ENCODE measurements at regions of chr17 and their contacts with region 1.

Region 1: GRCh38 chr17:76397687-76398487 is 13.5 kb downstream of the SPHK1 start:
- DNase-seq: peak; percentile 89
- CTCF ChIP-seq: peak; percentile 96

Region 2: GRCh38 chr17:76296186-76296585 is 101.7 kb before region 1 on chr17:
- CTCF ChIA-PET with region 1: interaction called, 203 read pairs
- POLR2A ChIA-PET with region 1: no interaction called
- DNase-seq: no peak
- CTCF ChIP-seq: no peak

Region 3: DNA sequence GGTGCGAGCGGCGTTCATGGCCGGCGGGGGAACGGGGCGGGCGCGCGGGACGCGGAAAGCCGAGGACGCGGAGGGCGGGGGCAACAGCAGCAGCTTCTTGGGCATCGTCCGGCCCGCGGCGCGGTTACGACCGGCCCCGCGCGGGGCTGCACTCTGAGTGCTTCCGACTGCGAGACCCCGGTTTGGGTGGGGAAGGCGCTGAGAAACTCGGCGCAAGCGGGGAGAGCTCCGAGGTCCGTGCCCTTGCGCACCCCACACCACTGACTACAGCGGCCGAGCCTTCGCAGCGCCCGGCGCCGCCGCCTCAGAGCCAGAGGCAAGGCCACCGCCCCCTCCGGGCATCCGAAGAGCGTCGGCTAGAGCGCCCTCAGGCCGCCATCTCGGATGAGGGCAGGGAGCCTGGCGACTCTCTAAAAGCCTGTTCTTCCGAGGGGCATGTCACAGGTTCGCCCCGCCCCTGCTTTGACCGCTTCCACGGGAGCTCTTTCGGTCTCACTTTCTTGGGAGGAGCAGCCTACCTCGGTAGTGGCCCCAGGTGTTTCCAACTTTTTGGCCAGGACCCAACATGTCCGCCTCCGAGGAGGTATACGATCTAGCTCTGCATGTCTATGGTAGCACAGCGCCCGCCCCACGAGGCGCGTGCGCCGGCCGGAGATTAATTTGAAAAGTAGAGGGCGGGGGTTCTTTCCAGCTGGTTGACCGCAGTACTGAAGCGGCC is 44.1 kb before region 1 on chr17 and contains the start of gene PRPSAP1:
- CTCF ChIA-PET with region 1: interaction called, 20 read pairs
- POLR2A ChIA-PET with region 1: no interaction called
- DNase-seq: peak; percentile 93
- CTCF ChIP-seq: no peak

Region 4: DNA sequence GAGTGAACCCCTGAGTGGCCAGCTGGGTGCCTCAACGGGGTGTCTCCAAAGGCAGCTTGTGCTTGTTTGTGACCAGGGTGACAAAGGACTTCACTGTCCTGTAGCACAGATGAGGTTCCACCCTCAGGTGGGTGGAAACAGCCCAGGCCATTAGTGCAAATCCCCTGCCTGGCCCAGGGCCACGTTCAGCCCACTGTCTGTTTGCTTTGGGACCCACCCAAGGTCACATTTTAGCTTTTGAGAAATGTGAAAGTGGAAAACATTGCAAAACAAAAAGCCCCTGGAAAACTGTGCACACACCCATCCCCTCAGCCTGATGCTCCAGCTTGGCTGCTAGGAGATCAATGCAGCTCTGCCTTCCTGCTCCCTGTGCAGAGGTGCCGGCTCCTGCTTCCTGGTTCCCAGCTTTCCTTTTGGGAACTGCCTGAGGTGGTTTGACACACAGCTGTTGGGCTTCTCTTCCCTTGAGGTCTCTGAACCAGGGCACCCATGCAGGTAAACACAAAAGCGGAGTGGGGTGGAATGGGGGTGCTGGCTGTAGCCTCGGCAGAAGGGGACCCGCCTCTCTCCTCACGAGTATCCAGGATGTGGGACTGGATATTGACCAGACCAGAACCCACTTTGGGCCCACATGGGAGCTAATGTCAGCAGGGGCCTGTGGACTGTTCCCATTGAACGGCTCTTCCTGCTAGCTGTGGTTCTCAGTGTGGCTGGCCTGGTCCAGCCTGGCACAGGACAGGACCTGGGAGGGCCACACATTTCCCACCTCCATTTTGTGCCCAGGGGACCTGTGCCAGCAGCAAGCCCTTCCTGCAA is 21.4 kb before region 1 on chr17:
- CTCF ChIA-PET with region 1: interaction called, 21 read pairs
- POLR2A ChIA-PET with region 1: no interaction called
- DNase-seq: no peak
- CTCF ChIP-seq: no peak

Region 5: DNA sequence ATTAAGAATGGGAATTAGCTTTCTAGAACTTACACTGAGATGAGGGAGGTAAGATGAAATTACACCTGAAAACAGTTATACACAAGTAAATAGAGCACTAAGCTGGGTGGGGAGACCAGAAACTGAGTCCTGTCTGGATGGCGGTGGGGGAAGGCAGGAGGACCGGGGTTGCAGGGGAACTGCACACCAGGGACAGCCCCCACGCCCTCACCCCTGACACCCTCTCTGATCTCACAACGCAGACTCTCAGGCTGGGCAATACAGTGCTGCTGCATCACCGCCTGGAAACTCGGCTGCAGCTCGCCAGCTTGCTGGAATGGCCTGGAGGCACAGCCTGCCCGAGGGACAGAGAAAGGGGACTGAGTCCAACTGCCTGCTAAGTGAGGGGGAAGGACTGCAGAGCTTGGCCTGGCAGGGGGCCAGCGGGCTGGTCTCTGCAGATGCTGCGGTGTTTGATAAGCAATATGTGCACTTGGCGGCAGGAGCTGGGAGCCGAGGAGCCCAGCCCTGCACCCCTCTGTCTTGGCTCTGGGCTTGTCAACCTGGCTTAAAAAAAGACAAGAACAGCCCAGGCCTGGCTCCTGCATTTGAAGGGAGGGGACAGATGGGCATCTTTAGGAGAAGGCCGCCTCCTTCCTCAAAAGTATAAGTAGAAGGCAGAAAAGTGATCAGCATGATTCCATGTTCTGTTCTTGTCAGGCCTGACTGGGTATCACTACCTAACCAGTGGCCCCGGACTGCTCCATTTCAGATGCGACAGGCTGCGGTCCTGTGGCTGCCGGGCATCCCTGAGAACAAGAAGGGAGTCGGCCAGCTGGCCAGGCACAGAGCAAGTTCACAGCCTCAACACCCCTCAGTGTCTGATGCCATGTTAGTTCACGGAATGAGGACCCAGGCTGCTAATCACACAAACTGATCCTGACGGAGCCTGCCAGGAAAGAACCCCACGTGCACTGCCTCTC is 16.7 kb after region 1 on chr17:
- CTCF ChIA-PET with region 1: interaction called, 85 read pairs
- POLR2A ChIA-PET with region 1: no interaction called
- DNase-seq: no peak
- CTCF ChIP-seq: no peak

Region 6: GRCh38 chr17:76458580-76459490 is 60.9 kb after region 1 on chr17:
- CTCF ChIA-PET with region 1: interaction called, 18 read pairs
- POLR2A ChIA-PET with region 1: interaction called, 4 read pairs
- DNase-seq: peak; percentile 77
- CTCF ChIP-seq: peak; percentile 57